ENCODE measurements at regions of chrX and their contacts with region 1.

Region 1: DNA sequence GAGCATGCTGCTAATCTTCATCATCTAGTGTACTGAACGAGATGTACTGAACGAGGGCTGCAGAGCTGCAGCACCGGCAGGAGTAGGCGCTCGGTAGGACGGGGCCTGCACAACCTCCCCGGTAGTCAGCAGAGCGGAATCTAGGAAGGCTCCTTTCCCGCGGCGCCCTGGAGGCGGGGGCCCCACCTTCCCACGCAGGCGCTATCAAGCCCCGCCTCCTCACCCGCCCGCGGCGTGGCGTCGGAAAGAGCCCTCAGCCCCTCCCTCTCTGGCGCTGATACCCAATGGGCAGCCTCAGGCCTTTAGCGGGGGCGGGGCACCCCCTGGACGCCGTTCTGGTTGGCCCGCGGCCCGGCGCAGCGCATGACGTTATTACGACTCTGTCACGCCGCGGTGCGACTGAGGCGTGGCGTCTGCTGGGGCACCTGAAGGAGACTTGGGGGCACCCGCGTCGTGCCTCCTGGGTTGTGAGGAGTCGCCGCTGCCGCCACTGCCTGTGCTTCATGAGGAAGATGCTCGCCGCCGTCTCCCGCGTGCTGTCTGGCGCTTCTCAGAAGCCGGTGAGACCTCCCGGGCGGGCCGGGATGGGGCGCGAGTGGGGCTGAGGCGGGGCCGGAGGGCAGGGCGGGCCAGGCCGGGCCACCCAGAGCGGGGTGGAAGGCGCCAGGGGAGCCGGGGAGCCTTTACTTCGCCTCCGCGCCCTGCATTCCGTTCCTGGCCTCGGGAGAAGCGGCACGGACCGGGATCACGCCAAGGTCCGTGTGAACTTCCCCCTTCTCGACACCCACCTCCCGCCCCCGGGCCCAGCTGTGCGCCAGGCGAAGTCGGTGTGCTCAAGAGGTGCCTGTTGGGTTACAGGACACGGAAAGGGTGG is at the start of gene PDHA1:
- DNase-seq: peak; percentile 88 to 90 (median 89)
- H3K4me3 ChIP-seq: peak within 1 kb of the TSS; percentile 52 to 79 (median 70)
- H3K4me3 Mint-ChIP-seq: peak within 1 kb of the TSS; percentile 78 to 86
- H3K27ac ChIP-seq: peak within 1 kb of the TSS; percentile 50 to 81
- H3K27ac Mint-ChIP-seq: peak within 1 kb of the TSS; percentile 83 to 95 (median 90)
- H3K4me1 ChIP-seq: peaks cover 25 to 28% of the 10 kb centered on the region in 2 donors
- H3K4me1 Mint-ChIP-seq: peaks cover 20% of the 10 kb centered on the region
- H3K27me3 ChIP-seq: no peaks in the 10 kb centered on the region
- H3K27me3 Mint-ChIP-seq: peaks cover 0 to 7% (median 2%) of the 10 kb centered on the region in 3 donors
- CTCF ChIP-seq: no peak
- polyA plus RNA-seq, gene PDHA1: 56.0 to 76.3 (median 74.8) TPM

Region 2: GRCh38 chrX:18425199-18426003 is 918.4 kb before region 1 on chrX and contains the start of gene CDKL5:
- intact Hi-C with region 1: loop called in 1 of 2 experiments (anchors 5 kb)
- DNase-seq: peak; percentile 92 to 93 (median 93)
- H3K4me3 ChIP-seq: peak within 1 kb of the TSS; percentile 57 to 86 (median 82)
- H3K4me3 Mint-ChIP-seq: peak within 1 kb of the TSS; percentile 83 to 92
- H3K27ac ChIP-seq: peak within 1 kb of the TSS; percentile 65 to 83
- H3K27ac Mint-ChIP-seq: peak within 1 kb of the TSS; percentile 50 to 91 (median 83)
- H3K4me1 ChIP-seq: peaks cover 12 to 23% of the 10 kb centered on the region in 2 donors
- H3K4me1 Mint-ChIP-seq: peaks cover 22% of the 10 kb centered on the region
- H3K27me3 ChIP-seq: peaks cover 0 to 27% of the 10 kb centered on the region in 2 donors
- H3K27me3 Mint-ChIP-seq: peaks cover 0 to 24% (median 3%) of the 10 kb centered on the region in 3 donors
- CTCF ChIP-seq: no peak
- polyA plus RNA-seq, gene CDKL5: 0.54 to 3.6 (median 1.4) TPM

Region 3: DNA sequence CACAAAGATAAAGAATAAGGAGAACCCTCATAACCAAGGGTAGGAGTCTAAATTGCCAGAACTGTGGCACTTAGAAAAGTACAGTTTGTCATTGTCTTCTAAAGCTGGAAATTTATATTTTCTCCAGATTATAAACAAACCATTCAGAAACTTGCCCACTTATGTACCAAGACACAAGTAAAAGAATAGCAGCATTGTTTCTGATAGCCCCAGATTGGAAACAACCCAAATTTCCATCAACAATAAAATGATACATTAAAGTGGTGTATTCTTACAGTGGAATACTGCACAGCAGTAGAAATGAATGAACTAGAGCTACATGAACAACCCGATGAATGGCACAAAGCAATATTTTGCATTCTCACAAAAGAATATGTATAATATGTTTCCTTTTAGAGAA is 63.1 kb before region 1 on chrX:
- intact Hi-C with region 1: no loop called
- DNase-seq: no peak
- H3K4me3 ChIP-seq: no peak overlapping the region
- H3K4me3 Mint-ChIP-seq: no peak overlapping the region
- H3K27ac ChIP-seq: no peak overlapping the region
- H3K27ac Mint-ChIP-seq: no peak overlapping the region
- H3K4me1 ChIP-seq: no peaks in the 10 kb centered on the region
- H3K4me1 Mint-ChIP-seq: no peaks in the 10 kb centered on the region
- H3K27me3 ChIP-seq: peaks cover 0 to 2% of the 10 kb centered on the region in 2 donors
- H3K27me3 Mint-ChIP-seq: peaks cover 0 to 3% (median 0%) of the 10 kb centered on the region in 3 donors
- CTCF ChIP-seq: no peak

Region 4: DNA sequence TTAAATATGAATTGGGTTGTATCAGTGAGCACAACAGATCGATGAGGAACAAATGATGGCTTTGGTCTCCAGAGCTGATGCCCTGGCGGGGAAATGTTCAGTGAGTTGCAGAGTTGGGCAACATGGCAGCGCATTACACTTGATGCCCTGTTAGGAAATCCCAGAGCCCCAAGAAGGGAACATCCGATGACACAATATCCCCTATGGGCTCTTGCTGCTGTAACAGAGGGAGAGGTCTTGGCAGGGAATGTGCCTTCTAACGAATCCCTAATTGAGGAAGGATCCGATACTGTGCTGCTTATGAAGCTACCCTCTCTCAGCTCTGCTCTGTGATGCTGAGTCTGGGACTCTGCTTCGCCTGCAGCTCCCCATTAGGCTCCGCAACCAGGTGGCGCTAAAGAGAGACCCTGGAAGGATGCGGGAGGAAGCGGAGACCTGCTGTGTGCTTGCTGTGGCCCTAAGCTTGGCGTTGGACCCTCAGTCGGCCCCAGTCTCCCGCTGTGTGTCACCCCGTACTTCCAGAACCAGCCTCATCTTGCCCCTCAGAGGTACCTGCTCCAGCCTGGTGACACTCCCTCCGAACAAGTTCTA is 38.9 kb after region 1 on chrX:
- intact Hi-C with region 1: no loop called
- DNase-seq: peak; percentile 36 to 76 (median 52)
- H3K4me3 ChIP-seq: peak overlapping the region in 1 of 3 experiments; percentile 14
- H3K4me3 Mint-ChIP-seq: peak overlapping the region in 1 of 2 donors; percentile 42
- H3K27ac ChIP-seq: no peak overlapping the region
- H3K27ac Mint-ChIP-seq: peak overlapping the region in 2 of 7 donors; percentile 20 to 41
- H3K4me1 ChIP-seq: peaks cover 7 to 10% of the 10 kb centered on the region in 2 donors
- H3K4me1 Mint-ChIP-seq: peaks cover 8% of the 10 kb centered on the region
- H3K27me3 ChIP-seq: no peaks in the 10 kb centered on the region
- H3K27me3 Mint-ChIP-seq: peaks cover 1 to 7% (median 4%) of the 10 kb centered on the region in 3 donors
- CTCF ChIP-seq: peak; percentile 36